Activated naive CD4-positive, alpha-beta T cell treated with anti-CD3 and anti-CD28 coated beads for 36 hours (primary cell): ENCODE measurements at regions of chr5 and their contacts with region 1.

Region 1: DNA sequence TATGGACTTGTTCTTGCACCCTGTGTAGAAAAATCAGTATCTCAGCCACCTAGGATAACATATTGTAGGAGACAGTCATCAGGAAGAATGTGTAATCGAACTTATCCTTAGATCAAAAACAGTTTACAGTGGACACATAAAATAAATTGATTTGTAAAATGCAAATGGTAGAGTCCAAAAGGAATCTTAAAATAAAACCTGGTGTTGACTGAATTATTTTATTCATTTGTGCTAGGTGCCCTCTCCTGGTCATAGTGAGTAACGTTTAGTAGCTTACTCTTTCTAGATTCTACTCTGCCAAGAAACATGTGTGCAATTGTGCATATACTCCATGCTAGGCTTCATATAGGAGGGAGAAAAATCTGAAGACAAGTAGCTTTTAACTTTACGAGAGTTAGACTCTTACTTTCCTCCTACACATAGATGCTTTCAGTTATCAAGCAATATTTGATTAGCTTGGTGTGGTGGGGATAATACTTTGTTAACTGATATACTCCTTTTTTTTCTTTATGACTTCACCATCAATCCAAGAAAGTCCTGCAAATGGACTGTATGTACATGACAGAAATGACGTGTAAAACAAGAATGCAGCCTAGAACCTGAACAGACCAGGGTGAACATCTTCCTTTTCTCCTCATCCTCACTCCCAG is 23.7 kb upstream of the LOX start:
- DNase-seq: no peak
- H3K4me3 Mint-ChIP-seq: no peak overlapping the region
- H3K27ac Mint-ChIP-seq: no peak overlapping the region
- H3K4me1 Mint-ChIP-seq: no peaks in the 10 kb centered on the region
- H3K27me3 Mint-ChIP-seq: no peaks in the 10 kb centered on the region

Region 2: GRCh38 chr5:120655828-120656435 is 1445.8 kb before region 1 on chr5:
- CTCF ChIA-PET with region 1: no interaction called
- intact Hi-C with region 1: loop called (anchors 5 kb)
- DNase-seq: peak; percentile 23
- H3K4me3 Mint-ChIP-seq: no peak overlapping the region
- H3K27ac Mint-ChIP-seq: no peak overlapping the region
- H3K4me1 Mint-ChIP-seq: no peaks in the 10 kb centered on the region
- H3K27me3 Mint-ChIP-seq: no peaks in the 10 kb centered on the region

Region 3: GRCh38 chr5:121968910-121969607 is 132.7 kb before region 1 on chr5:
- CTCF ChIA-PET with region 1: no interaction called
- intact Hi-C with region 1: loop called (anchors 1 kb)
- DNase-seq: no peak
- H3K4me3 Mint-ChIP-seq: no peak overlapping the region
- H3K27ac Mint-ChIP-seq: no peak overlapping the region
- H3K4me1 Mint-ChIP-seq: peaks cover 37% of the 10 kb centered on the region
- H3K27me3 Mint-ChIP-seq: no peaks in the 10 kb centered on the region

Region 4: GRCh38 chr5:122067390-122067789 is 34.4 kb before region 1 on chr5:
- CTCF ChIA-PET with region 1: no interaction called
- intact Hi-C with region 1: no loop called
- DNase-seq: no peak
- H3K4me3 Mint-ChIP-seq: no peak overlapping the region
- H3K27ac Mint-ChIP-seq: no peak overlapping the region
- H3K4me1 Mint-ChIP-seq: no peaks in the 10 kb centered on the region
- H3K27me3 Mint-ChIP-seq: peaks cover 2% of the 10 kb centered on the region

Region 5: GRCh38 chr5:122142480-122143164 is 40.9 kb after region 1 on chr5:
- CTCF ChIA-PET with region 1: no interaction called
- intact Hi-C with region 1: no loop called
- DNase-seq: no peak
- H3K4me3 Mint-ChIP-seq: no peak overlapping the region
- H3K27ac Mint-ChIP-seq: no peak overlapping the region
- H3K4me1 Mint-ChIP-seq: peaks cover 10% of the 10 kb centered on the region
- H3K27me3 Mint-ChIP-seq: no peaks in the 10 kb centered on the region

Region 6: GRCh38 chr5:122156724-122157325 is 55.1 kb after region 1 on chr5:
- CTCF ChIA-PET with region 1: no interaction called
- intact Hi-C with region 1: loop called (anchors 5 kb)
- DNase-seq: peak; percentile 13
- H3K4me3 Mint-ChIP-seq: no peak overlapping the region
- H3K27ac Mint-ChIP-seq: no peak overlapping the region
- H3K4me1 Mint-ChIP-seq: peaks cover 12% of the 10 kb centered on the region
- H3K27me3 Mint-ChIP-seq: peaks cover 2% of the 10 kb centered on the region

Region 7: GRCh38 chr5:122202952-122203351 is 101.2 kb after region 1 on chr5:
- CTCF ChIA-PET with region 1: no interaction called
- intact Hi-C with region 1: no loop called
- DNase-seq: no peak
- H3K4me3 Mint-ChIP-seq: no peak overlapping the region
- H3K27ac Mint-ChIP-seq: no peak overlapping the region
- H3K4me1 Mint-ChIP-seq: no peaks in the 10 kb centered on the region
- H3K27me3 Mint-ChIP-seq: peaks cover 3% of the 10 kb centered on the region

Region 8: DNA sequence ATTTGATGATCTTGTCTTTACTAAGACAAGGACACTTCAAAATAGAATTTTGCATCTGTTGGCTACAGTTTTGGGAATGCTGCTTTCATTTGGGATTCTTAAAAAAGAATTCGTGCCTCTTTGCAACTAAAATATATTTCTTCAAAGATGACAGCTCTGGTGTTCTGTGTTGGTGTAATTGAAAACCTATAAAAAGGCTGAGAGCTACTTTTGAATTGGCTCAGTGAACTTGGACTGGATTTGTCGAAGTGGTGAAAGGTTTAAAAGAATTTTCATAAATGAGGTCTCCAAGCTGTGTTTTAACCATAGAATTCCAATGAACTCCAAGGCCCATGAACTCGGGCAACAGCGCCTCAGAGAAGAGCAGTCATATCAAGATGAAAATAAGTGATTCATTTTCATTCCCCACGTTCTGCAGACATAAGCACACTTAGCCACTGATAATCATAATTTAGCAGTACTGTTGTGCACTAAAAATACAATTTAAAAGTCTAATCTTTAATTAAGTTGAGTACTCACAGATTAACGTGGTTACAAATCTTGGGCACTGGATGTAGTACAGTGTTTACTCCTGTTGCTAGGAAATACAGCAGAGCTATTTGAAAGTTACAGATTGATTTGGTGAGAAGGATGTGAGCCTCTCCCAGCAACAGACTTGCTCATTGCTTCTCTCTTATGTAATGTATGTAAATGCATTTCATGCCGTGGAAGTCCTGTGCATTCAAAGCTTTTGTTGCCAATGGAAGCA is 221.2 kb after region 1 on chr5:
- CTCF ChIA-PET with region 1: no interaction called
- intact Hi-C with region 1: no loop called
- DNase-seq: no peak
- H3K4me3 Mint-ChIP-seq: no peak overlapping the region
- H3K27ac Mint-ChIP-seq: no peak overlapping the region
- H3K4me1 Mint-ChIP-seq: no peaks in the 10 kb centered on the region
- H3K27me3 Mint-ChIP-seq: peaks cover 4% of the 10 kb centered on the region